AG04449 (cell line): ENCODE measurements at regions of chr7 and their contacts with region 1.

Region 1: DNA sequence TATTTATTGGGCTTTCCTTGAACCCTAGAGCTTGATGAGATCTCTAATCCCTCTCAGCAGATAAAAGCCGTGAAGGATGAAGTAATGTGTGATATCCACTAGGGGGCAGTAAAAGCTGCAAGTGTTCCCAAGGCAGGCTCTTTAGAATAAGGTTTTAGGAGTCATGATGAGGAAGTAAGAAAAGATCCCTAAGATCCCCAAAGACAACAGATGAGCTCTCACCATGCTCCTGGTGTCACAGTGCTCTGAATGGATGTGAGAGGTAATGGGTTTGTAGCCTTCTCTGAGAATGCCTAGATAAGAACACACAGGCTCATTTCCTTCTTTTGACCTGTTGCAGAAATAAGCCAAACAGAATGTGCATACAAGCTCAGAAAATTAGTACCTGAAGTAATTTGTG is 70.4 kb upstream of the ITPRID1 start:
- DNase-seq: peak; percentile 7
- H3K4me3 ChIP-seq: no peak overlapping the region
- CTCF ChIP-seq: peak; percentile 61

Region 2: DNA sequence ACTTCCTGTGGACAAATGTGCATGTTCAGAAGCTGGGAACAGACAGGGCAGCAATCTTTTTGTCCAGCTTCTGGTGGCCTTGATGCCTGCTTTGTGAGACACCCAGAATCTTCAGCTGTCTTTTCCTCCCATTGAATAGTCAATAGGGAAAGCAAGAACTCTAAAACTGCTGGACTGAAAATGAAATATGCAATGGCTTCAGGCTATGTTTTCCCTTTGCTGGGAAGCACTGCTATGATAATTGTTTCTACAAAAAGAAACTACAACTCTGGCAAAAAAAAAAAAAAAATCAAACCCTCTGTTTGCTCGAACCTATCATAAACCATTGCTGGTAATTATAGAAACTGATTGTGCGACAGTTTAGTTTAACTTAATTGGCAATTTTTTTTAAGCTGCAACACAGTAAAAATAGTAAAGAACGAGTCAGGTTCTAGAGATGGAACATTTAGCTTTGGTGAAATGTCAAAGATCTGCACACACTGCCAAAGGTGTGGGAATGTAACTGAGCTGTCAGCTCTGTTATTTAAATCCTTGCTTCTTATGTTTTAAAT is 23.9 kb before region 1 on chr7:
- CTCF ChIA-PET with region 1: interaction called, 10 read pairs
- POLR2A ChIA-PET with region 1: no interaction called
- DNase-seq: no peak
- H3K4me3 ChIP-seq: no peak overlapping the region
- CTCF ChIP-seq: no peak

Region 3: DNA sequence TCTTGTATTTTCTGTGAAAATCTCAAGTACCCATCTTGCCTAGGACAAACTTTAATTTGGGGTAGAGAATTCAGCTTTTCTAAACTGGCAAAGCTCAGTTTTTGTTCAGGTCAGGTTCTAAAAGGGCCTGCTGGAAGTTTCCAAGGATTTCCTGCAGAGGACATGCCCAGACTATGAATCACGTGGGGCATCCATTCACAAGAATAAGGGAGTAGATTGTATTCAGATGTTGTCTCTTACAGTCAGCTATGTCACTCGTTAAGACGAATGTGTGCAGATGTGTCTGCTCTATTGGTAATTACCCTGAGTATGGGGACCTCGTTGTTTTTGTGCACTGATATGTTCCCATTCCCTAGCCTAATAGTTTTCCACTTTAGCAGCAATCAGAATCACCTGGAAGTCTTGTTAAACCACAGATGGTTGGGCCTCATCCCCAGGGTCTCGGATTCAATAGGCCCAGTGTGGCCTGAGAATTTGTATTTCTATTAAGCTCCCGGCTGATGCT is 10.6 kb before region 1 on chr7:
- CTCF ChIA-PET with region 1: interaction called, 10 read pairs
- POLR2A ChIA-PET with region 1: no interaction called
- DNase-seq: no peak
- H3K4me3 ChIP-seq: no peak overlapping the region
- CTCF ChIP-seq: no peak

Region 4: DNA sequence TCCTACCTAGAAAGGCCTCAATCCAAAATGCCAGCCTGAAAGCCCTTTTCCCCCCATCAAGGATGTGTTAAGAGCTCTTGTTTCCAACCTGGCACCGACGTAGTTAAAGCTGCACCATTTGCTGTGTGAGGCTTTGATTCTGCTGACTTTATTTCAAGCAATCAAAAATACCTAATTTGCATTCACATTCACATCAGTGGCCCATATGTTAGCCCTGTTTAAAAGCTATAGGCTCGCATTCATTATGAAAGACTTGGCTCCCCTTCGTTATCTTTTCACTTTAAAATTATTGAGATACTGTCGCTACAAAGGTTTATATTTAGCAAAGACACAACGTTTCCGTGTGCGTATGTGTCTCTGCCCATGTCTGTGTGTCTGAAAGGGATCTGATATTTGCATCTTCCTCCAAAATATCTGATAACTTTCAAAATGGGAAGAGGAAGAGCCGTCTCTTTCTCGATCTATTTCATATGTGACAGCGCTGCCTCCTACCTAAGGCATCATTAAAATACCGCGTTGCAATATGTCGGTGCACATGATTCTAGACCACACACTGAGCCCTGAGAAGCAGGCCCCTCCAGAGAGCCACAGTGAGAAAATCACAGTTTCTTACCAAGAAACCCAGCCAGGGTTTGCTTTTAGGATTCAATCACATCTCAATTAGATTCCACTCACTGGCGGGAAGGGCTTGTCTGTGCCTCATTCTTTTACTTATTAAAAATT is 13.3 kb after region 1 on chr7:
- CTCF ChIA-PET with region 1: interaction called, 14 read pairs
- POLR2A ChIA-PET with region 1: no interaction called
- DNase-seq: no peak
- H3K4me3 ChIP-seq: no peak overlapping the region
- CTCF ChIP-seq: no peak

Region 5: DNA sequence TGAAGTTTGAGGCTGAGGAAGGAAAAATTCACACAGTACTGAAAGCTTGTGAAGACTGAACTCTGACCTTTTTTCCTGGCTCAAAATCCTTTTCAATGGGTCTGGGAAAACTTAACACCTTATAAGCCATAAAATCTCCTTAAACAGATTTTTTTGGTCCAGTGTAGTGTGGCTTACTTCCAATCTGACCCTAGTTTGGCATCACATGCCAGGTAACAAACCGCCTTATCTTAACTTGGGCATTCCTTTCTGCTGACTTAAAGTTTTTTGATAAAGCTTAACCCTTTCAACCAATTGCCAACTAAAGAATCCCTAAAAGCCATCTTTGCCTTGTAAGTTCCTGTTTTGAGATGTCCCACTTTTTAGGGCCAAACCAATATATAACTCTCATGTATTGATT is 57.2 kb after region 1 on chr7:
- CTCF ChIA-PET with region 1: no interaction called
- POLR2A ChIA-PET with region 1: no interaction called
- DNase-seq: no peak
- H3K4me3 ChIP-seq: no peak overlapping the region
- CTCF ChIP-seq: no peak

Region 6: DNA sequence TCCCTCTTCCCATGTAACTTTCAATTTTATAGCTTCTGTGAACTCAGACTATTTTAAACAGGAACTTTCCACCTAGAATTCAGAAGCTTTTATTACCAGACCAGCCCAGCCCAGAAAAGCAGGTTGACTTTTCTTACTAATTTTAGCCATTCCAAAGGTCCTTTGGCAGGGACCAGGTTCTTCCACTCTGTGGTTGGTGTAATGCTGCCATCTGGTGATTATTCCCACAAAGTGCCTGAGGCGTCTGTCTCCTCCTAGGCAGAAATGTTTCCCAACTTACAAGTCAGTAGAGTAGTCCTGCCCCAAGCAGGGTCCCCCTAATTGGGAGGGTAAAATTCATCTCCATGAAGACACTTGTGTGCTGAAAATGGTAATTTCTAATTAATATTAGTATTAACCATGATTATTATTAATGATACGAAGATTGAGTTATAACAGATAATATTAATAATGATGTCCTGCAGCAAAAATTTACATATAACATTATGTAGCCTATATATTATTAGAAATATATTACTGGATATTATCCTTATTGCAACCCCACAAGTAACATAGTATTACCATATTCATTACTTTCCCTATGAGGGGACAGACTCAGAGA is 190.5 kb after region 1 on chr7:
- CTCF ChIA-PET with region 1: interaction called, 67 read pairs
- POLR2A ChIA-PET with region 1: no interaction called
- DNase-seq: peak; percentile 19
- H3K4me3 ChIP-seq: no peak overlapping the region
- CTCF ChIP-seq: peak; percentile 52

Region 7: DNA sequence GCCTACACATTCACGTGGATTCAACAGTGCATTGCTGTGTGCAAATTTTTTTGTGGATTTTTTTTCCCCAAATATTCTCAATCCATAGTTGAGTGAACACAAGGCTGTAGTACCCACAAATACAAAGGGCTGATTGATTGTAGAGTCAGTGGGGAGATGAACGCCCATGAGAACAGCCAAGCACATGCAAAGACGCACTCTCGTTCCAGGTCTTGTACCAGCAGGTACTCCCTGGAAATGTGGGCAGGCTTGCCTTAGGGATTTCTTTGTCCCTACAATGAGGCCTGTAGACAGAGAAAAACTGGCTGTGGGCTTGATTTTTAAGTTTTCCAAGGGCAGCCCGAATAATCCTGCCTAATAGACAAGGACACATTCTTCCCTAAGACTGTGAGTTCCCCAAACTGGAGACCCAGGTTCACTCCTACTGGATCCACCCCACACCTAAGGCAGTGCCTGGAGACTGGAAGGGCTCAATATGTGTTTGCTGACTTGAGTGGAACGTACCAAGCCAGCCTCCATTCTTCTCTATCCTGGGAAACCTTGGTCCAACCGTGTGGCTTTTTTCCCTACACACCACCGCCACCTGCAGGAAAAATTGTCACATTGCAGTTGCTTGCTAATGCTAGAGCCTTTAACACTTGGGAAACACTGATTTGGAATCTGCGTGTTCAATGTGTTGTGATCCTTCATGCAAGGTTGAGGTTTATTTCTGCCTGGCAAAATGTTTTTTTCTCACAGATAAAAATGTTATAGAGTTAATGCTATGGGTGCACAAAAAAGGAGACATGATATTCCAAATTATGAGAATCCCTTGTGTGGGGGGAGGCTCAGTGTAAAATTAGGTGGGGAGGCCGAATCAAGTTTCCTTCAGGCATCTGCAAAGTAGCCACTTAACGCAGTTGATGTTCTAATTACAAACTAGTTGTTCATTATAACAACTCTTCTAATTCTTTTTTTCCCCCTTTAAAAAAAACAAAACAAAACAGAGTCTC is 292.8 kb after region 1 on chr7:
- CTCF ChIA-PET with region 1: interaction called, 14 read pairs
- POLR2A ChIA-PET with region 1: no interaction called
- DNase-seq: no peak
- H3K4me3 ChIP-seq: no peak overlapping the region
- CTCF ChIP-seq: peak; percentile 81